Pancreas (tissue), 10 donors: ENCODE measurements at regions of chr6 and their contacts with region 1.

Region 1: DNA sequence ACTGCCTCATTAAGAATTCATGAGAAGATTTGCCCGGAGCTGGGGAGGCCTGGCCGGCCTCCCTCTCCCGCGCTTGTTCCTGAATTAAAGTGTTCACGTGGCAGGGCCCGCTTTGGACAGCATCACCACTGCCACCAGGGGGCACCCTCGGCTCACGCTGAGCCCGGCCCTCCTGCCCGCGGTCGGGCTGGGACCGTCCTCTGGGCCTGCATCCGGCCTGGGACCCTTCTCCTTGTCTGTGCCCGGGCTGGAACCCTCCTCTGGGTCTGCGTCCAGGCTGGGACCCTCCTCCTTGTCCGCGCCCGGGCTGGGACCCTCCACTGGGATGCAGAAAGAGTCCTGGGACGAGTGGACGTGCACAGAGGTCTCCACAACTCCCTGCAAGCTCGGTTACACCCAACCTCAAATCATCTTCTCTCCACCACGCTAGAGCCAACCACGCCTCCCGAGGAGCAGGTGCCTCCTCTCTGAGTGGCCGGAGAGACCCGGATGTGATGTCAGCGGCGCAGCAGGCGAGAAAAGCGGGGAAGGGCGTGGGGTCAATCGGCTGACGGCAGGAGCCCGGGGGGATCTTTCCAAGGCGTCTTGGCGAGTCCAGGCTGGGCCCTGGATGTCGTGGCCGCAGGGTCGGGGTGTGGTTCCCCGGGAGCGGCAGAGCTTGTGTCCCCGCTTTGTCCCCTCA is 50.9 kb upstream of the DACT2 start:
- DNase-seq: peak; percentile 54 to 96 (median 82)
- ATAC-seq: peak; percentile 88 to 97 (median 92)
- H3K4me3 ChIP-seq: no peak overlapping the region
- H3K27ac ChIP-seq: no peak overlapping the region
- H3K4me1 ChIP-seq: peaks cover 0 to 5% (median 0%) of the 10 kb centered on the region in 3 donors
- H3K27me3 ChIP-seq: no peaks in the 10 kb centered on the region
- CTCF ChIP-seq: peak; percentile 76 to 90 (median 80)

Region 2: DNA sequence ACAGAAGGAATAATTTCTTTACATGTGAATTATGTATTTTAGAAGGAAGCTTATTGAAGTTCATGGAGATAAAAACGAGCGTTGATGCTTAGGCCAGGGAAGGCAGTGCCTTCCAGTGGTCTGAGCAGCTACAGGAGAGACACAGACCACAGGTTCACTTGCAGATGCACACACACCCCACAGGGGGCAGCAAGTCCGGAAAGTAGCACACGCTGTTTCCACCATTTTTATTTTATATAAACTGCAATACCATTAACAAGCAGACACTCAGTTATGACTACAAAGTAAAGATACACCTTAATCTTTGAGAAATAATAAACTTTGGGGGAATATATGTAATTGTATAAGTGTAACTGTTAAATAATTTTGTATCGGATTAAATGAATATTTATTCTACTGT is 37.4 kb before region 1 on chr6:
- intact Hi-C with region 1: no loop called
- DNase-seq: peak in 1 of 6 donors; percentile 53
- ATAC-seq: peak; percentile 87 to 95 (median 93)
- H3K4me3 ChIP-seq: peak overlapping the region in 3 of 4 donors; percentile 13 to 35 (median 31)
- H3K27ac ChIP-seq: peak overlapping the region in 3 of 4 donors; percentile 8 to 76 (median 69)
- H3K4me1 ChIP-seq: no peaks in the 10 kb centered on the region
- H3K27me3 ChIP-seq: no peaks in the 10 kb centered on the region
- CTCF ChIP-seq: peak; percentile 27 to 64 (median 50)

Region 3: GRCh38 chr6:168877821-168878282 is 507.4 kb after region 1 on chr6:
- intact Hi-C with region 1: loop called in 2 of 3 experiments (anchors 5 to 10 kb)
- DNase-seq: no peak
- ATAC-seq: peak in 3 of 4 donors; percentile 55 to 76 (median 75)
- H3K4me3 ChIP-seq: no peak overlapping the region
- H3K27ac ChIP-seq: no peak overlapping the region
- H3K4me1 ChIP-seq: no peaks in the 10 kb centered on the region
- H3K27me3 ChIP-seq: no peaks in the 10 kb centered on the region
- CTCF ChIP-seq: no peak

Region 4: DNA sequence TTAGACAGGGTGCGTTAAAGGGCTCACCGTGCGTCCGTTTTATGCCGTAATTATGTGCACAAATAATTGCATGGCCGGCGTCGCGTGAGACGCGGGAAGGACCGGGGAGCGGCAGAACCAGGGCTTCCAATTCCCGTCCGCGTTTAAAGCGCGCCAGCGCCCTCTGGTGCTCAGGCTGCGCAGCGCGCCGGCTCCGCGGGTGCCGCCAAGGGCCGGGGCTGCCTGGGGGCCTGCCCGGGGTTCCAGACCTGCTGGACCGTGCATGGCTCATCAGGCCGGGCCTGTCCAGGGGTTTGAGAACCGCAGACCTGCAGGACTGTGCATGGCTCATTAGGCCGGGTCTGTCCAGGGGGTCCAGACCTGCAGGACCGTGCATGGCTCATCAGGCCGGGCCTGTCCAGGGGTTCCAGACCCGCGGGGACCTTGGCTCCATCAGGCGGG is 514.2 kb after region 1 on chr6:
- intact Hi-C with region 1: loop called (anchors 2 to 10 kb)
- DNase-seq: peak; percentile 45 to 94 (median 76)
- ATAC-seq: peak; percentile 69 to 91 (median 86)
- H3K4me3 ChIP-seq: peak overlapping the region in 1 of 4 donors; percentile 19
- H3K27ac ChIP-seq: no peak overlapping the region
- H3K4me1 ChIP-seq: no peaks in the 10 kb centered on the region
- H3K27me3 ChIP-seq: no peaks in the 10 kb centered on the region
- CTCF ChIP-seq: peak; percentile 88 to 96 (median 92)

Region 5: DNA sequence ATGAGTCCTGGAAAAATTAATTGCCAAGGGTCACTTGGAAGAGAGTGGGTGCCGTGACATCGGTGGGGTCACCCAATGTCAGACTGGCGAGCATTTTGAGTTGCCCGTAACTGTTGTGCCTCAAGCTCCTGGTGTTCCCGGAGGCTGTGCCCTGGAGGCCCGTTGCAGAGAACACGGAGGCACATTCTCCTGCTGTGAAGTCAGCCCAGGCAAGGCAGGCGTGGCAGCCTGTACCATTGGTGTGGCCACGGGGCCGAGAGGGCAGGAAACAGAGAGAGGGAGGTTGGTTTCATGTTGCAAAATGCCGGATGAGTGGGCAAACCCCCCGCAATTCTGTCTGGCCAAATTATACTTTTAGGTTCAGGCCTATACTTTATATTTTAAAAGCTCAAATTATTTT is 802.0 kb after region 1 on chr6:
- intact Hi-C with region 1: no loop called
- DNase-seq: no peak
- ATAC-seq: peak in 1 of 4 donors; percentile 44
- H3K4me3 ChIP-seq: no peak overlapping the region
- H3K27ac ChIP-seq: no peak overlapping the region
- H3K4me1 ChIP-seq: no peaks in the 10 kb centered on the region
- H3K27me3 ChIP-seq: no peaks in the 10 kb centered on the region
- CTCF ChIP-seq: no peak